ENCODE measurements at regions of chr2 and their contacts with region 1.

Region 1: DNA sequence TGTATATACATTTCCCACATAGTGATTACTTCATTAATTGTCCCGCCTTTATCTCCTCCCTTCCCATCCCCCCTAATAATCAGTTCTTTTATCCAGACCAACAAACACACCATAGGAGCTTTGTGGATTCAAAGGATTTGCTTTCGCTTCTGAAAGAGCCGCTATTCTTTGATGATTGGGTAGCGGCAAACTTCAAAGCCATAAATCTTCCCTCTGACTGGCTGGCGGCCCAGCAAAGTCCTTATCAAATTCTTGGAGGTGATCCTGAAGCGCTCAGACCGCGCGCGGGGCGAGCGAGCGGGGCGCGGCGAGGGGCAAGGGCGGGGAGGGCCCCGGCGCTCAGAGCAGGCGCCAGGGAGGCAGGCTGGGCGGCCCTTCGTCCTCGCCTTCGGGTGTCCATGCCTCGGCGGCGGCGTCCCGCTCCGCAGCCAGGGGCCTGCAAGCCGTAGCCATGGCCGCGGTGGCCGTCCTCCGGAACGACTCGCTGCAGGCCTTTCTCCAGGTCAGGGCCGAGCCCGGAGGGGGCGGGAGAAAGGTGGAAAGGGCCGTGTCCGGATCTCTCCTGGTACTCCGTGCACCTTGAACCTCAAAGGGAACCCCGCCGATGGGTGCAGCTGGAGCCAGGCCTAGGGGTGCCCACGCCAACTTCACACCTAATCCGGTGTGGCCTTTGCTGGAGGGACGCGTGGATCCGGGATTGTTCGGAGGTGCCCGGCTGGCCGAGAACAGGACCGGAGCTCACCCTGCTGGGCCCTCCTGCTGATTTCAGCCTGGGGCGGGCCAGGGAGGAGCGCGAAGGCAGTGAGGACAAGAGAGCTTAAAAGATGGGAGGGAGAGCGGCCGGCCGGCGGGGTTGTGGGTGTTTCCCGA is at the start of gene SP5:
- DNase-seq: peak; percentile 15
- ATAC-seq: no peak
- H3K4me3 Mint-ChIP-seq: peak within 1 kb of the TSS; percentile 71
- H3K27ac Mint-ChIP-seq: no peak within 1 kb of the TSS
- H3K4me1 Mint-ChIP-seq: peaks cover 12% of the 10 kb centered on the region
- H3K27me3 Mint-ChIP-seq: peaks cover 58% of the 10 kb centered on the region
- CTCF ChIP-seq: no peak
- total RNA-seq, gene SP5: not detected in 2 replicates

Region 2: GRCh38 chr2:170783551-170783950 is 68.3 kb after region 1 on chr2:
- CTCF ChIA-PET with region 1: no interaction called
- POLR2A ChIA-PET with region 1: no interaction called
- intact Hi-C with region 1: no loop called
- DNase-seq: no peak
- ATAC-seq: no peak
- H3K4me3 Mint-ChIP-seq: no peak overlapping the region
- H3K27ac Mint-ChIP-seq: no peak overlapping the region
- H3K4me1 Mint-ChIP-seq: no peaks in the 10 kb centered on the region
- H3K27me3 Mint-ChIP-seq: peaks cover 9% of the 10 kb centered on the region
- CTCF ChIP-seq: no peak

Region 3: DNA sequence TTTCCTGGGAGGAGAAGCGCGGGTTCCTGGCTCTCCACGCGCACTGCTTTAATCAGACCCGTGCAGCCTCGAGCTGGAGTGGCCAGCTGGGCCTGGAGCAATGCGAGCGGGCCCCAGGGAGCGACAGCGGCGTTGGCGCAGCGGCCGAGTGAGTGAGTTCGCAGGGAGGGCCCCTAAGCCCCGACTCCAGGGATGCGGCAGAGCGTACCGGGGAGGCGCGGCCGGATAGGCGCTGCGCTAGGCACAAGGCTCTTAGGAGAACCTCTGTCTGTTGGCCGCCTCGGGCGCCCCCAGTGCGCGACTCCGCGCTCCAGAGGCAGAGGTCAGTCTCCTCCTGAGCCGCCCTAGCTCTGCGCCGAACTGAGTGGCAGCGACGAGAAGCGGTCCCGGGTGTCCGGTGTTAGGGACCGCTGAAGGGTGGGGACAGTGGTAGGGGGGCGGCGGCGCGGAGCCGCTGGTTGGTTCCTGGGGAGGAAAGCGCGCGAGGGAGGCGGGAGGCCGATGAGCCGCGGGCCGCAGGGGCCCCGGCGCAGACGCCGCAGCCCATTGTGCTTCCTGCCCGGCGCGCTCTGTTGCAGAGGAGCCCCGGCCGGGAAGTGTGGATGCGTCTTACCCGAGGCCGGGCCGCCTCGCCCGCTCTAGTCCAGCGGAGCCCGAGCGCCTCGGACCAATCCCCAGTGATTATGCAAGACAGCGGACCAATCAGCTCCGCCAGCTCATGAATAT is 1369.6 kb after region 1 on chr2:
- CTCF ChIA-PET with region 1: no interaction called
- POLR2A ChIA-PET with region 1: no interaction called
- intact Hi-C with region 1: loop called (anchors 5 kb)
- DNase-seq: peak; percentile 46
- ATAC-seq: peak; percentile 43
- H3K4me3 Mint-ChIP-seq: peak overlapping the region; percentile 75
- H3K27ac Mint-ChIP-seq: peak overlapping the region; percentile 79
- H3K4me1 Mint-ChIP-seq: peaks cover 44% of the 10 kb centered on the region
- H3K27me3 Mint-ChIP-seq: peaks cover 75% of the 10 kb centered on the region
- CTCF ChIP-seq: no peak